AG04450 (cell line): ENCODE measurements at regions of chr7 and their contacts with region 1.

Region 1: GRCh38 chr7:17769918-17770317 is 170.4 kb downstream of the SNX13 start:
- DNase-seq: peak; percentile 42
- H3K4me3 ChIP-seq: no peak overlapping the region
- H3K27ac ChIP-seq: no peak overlapping the region
- H3K27me3 ChIP-seq: no peaks in the 10 kb centered on the region
- CTCF ChIP-seq: peak; percentile 82

Region 2: GRCh38 chr7:17269341-17270221 is 500.3 kb before region 1 on chr7:
- CTCF ChIA-PET with region 1: no interaction called
- POLR2A ChIA-PET with region 1: no interaction called
- DNase-seq: no peak
- H3K4me3 ChIP-seq: no peak overlapping the region
- H3K27ac ChIP-seq: no peak overlapping the region
- H3K27me3 ChIP-seq: no peaks in the 10 kb centered on the region
- CTCF ChIP-seq: no peak

Region 3: GRCh38 chr7:17758008-17758407 is 11.9 kb before region 1 on chr7:
- CTCF ChIA-PET with region 1: interaction called, 13 read pairs
- POLR2A ChIA-PET with region 1: no interaction called
- DNase-seq: no peak
- H3K4me3 ChIP-seq: no peak overlapping the region
- H3K27ac ChIP-seq: no peak overlapping the region
- H3K27me3 ChIP-seq: peaks cover 2% of the 10 kb centered on the region
- CTCF ChIP-seq: no peak

Region 4: DNA sequence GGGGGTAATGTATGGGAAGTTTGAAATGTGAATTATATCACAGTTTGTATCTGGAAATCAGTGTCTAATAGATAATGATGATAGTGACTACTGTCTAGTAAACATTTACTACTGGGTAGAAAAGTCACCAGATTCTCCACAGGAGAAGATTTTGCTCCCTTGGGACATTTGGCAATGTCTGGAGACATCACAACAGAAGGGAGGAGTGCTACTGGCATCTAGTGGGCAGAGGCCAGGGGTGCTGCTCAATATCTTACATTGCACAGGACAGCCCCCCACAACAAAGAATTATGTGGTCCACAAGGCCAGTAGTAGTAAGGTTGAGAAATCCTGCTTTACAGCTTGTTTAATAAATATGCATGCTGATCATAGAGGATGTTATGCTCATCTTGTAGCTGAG is 350.1 kb after region 1 on chr7:
- CTCF ChIA-PET with region 1: interaction called, 39 read pairs
- POLR2A ChIA-PET with region 1: no interaction called
- DNase-seq: no peak
- H3K4me3 ChIP-seq: no peak overlapping the region
- H3K27ac ChIP-seq: no peak overlapping the region
- H3K27me3 ChIP-seq: no peaks in the 10 kb centered on the region
- CTCF ChIP-seq: peak; percentile 46

Region 5: DNA sequence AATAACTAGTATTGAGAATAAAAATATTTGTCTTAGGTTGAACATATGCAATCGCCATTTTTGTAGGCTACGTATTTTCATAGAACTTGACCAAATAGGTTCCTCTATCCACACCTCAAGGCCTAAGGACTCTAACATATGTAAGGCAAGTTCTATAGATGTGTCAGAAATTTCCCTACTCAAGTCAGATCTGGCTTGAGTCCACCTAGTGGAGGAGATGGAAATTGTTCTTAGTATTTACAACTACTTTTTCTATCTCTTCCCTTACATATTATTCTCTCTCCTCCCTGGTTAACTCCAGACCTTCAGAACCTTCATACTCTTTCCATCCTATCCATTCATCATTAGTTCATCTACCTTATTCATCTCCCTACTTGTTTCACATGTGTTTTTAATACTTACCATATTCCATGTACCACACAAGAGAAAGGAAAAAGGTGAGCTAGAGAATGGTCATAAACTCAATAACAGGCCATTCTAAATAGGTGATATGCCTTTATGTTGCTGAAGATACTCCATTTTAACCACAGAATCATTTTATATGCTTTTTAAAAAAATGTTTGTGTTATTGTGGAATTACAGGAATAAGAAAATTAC is 551.2 kb after region 1 on chr7:
- CTCF ChIA-PET with region 1: interaction called, 64 read pairs
- POLR2A ChIA-PET with region 1: no interaction called
- DNase-seq: no peak
- H3K4me3 ChIP-seq: no peak overlapping the region
- H3K27ac ChIP-seq: no peak overlapping the region
- H3K27me3 ChIP-seq: no peaks in the 10 kb centered on the region
- CTCF ChIP-seq: peak; percentile 63

Region 6: DNA sequence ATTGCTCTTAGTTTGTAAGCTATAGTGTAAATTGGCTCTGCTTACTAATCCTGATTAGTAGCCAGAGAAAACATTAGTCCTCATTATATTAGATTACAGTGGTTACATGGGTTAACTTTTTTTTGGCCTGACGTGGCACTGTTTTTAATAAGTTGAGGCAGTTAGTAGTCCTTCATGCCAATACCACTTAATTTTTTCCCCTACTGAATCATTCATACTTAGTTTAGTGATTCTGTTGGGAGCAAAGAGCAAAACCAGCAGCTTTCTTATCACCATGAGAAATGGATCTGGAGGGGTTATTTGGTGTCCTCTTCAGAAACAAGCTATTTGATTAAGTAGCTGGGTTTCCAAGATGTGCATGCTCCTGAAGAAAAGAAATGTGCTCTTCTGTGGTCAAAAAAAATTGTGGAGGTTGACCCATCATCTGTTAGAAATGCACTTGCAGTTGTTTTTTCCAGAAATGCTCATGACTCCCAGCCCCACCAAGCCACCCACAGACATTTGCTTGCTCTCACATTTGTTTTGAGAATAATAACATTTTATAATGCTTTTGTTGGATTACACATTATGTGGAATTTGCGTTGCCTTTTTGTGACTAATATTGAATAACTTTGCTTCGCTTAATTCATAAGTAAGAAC is 984.2 kb after region 1 on chr7:
- CTCF ChIA-PET with region 1: no interaction called
- POLR2A ChIA-PET with region 1: no interaction called
- DNase-seq: peak; percentile 71
- H3K4me3 ChIP-seq: no peak overlapping the region
- H3K27ac ChIP-seq: no peak overlapping the region
- H3K27me3 ChIP-seq: no peaks in the 10 kb centered on the region
- CTCF ChIP-seq: no peak